Activated naive CD4-positive, alpha-beta T cell treated with anti-CD3 and anti-CD28 coated beads for 36 hours (primary cell): ENCODE measurements at regions of chr2 and their contacts with region 1.

Region 1: DNA sequence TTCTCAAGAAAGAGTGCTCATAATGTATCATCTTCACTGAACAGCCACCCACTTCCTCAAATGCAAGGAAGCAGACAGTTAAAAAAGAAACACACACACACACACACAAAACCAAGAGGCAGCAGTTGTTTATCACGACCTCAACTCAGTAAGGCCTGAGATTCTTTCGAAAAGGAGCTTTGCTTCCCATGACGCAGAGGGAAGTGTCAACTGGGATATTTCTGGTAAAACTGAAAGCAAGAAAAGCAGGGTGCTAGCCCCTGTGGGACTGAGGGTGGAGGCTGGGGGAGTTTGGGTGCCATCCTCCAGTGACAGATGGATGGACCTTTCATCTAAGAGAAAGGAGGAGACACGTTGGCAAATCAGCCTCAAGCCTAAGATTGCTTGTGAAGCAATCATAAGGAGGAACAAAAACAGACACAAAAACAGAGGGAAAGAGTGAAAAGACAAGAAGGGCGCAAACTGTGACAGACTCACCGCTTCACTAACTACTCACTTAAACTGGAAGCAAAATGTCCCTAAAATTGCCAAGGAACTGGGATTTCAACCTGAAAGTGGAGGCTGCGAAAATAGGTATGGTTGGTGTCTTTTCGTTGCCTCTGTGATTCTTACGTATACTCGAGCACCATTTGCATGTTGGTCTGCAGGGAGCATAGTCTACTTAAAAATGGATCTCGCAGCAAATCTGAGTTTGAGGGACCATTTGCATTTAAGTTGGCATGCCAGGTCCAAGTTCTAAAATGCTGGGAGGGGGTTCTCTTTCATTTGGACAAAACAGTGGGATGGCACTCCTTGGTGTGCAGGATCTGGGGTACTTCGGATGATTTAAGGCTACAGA is at the start of gene ARHGAP25:
- DNase-seq: peak; percentile 88
- H3K4me3 Mint-ChIP-seq: no peak within 1 kb of the TSS
- H3K27ac Mint-ChIP-seq: no peak within 1 kb of the TSS
- H3K4me1 Mint-ChIP-seq: peaks cover 33% of the 10 kb centered on the region
- H3K27me3 Mint-ChIP-seq: no peaks in the 10 kb centered on the region
- total RNA-seq, gene ARHGAP25: 43.0 to 46.7 TPM

Region 2: DNA sequence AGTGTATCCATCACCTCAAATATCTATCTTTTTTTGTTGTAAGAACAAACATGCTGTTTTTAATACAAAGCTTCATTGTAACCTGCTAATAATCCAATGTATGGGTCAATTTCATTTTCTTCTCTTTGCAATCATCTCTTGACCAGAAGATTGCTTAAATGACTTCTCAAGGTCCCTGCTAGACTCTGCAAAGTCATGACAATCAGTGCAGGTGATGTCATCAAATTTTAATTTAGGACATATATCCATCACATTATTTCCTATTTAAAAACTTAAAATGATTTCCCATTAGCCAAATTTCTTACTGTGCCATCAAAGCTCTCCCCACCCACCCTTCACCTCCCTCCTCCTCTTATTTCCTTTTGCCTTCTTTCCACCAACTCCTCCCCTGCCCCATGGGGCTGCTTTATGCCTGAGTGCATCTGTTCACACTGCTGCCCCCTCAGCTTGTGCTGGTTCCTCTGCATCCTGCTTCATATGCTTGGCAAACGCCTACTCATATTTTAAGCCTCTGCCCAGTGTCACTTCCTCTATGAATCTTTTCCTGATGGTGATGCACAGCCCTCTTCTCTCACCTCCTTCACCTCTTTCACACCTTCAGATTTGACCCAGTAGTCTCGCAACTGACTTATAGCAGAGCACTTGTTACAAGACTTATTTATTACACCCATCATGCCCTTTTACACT is 349.5 kb before region 1 on chr2:
- CTCF ChIA-PET with region 1: no interaction called
- intact Hi-C with region 1: loop called (anchors 1 kb)
- DNase-seq: peak; percentile 72
- H3K4me3 Mint-ChIP-seq: no peak overlapping the region
- H3K27ac Mint-ChIP-seq: peak overlapping the region; percentile 9
- H3K4me1 Mint-ChIP-seq: peaks cover 40% of the 10 kb centered on the region
- H3K27me3 Mint-ChIP-seq: peaks cover 5% of the 10 kb centered on the region

Region 3: GRCh38 chr2:68709421-68709911 is 25.4 kb before region 1 on chr2:
- CTCF ChIA-PET with region 1: interaction called, 32 read pairs
- intact Hi-C with region 1: no loop called
- DNase-seq: peak; percentile 34
- H3K4me3 Mint-ChIP-seq: no peak overlapping the region
- H3K27ac Mint-ChIP-seq: no peak overlapping the region
- H3K4me1 Mint-ChIP-seq: peaks cover 20% of the 10 kb centered on the region
- H3K27me3 Mint-ChIP-seq: no peaks in the 10 kb centered on the region

Region 4: GRCh38 chr2:68751397-68752339 is 16.8 kb after region 1 on chr2:
- CTCF ChIA-PET with region 1: interaction called, 76 read pairs
- intact Hi-C with region 1: no loop called
- DNase-seq: peak; percentile 98
- H3K4me3 Mint-ChIP-seq: peak overlapping the region; percentile 28
- H3K27ac Mint-ChIP-seq: peak overlapping the region; percentile 93
- H3K4me1 Mint-ChIP-seq: peaks cover 87% of the 10 kb centered on the region
- H3K27me3 Mint-ChIP-seq: no peaks in the 10 kb centered on the region

Region 5: GRCh38 chr2:68837164-68837860 is 102.4 kb after region 1 on chr2:
- CTCF ChIA-PET with region 1: interaction called, 4 read pairs
- intact Hi-C with region 1: loop called (anchors 1 kb)
- DNase-seq: peak; percentile 85
- H3K4me3 Mint-ChIP-seq: no peak overlapping the region
- H3K27ac Mint-ChIP-seq: peak overlapping the region; percentile 61
- H3K4me1 Mint-ChIP-seq: peaks cover 34% of the 10 kb centered on the region
- H3K27me3 Mint-ChIP-seq: no peaks in the 10 kb centered on the region